Activated CD4-positive, alpha-beta memory T cell treated with anti-CD3 and anti-CD28 coated beads, Interleukin-2, amount 10 ng/mL, durations not matched to agents 7 days and 5 days (primary cell): ENCODE measurements at regions of chr22 and their contacts with region 1.

Region 1: DNA sequence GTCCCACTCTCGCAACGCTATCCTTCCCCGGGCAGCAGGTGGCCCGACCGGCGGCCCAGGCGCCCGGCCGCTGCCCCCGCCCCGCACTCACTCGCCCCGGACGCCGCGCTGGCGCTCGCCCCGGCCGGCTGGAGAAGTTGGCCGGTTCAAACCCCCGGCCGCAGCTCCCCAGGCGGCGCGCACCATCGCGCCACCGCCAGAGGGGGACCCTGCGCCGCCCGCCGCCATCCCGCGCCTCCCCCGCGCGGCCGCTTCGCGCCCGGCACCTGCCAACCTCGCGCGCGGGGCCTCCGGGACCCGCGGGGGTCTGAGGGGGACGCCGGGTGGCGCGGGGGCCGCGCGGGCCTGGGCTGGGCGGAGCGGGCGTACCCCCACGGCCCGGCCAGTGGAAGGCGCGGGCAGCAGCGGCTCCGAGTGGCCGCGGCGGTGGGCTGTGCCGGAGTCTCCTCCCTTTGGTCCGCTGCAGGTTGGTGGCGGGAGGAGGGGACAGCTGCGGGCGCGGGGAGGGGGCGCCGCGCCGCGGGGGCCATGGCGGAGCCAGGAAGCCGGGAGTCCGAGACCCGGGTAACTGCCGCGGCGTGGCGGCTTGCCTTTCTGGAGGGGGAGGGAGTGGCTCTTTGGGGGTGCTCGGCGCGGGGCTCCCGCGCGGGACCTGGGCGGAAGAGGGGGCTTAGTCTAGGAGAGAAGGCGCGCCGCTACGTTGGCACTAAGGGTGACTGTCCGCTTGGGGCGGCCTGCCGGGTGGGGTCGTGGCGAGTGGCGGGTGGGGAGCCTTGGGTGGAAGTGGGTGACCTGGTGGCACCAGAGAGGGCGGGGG is at the starts of genes MPST and TST:
- DNase-seq: peak; percentile 63
- H3K4me3 Mint-ChIP-seq: peak within 1 kb of the TSS; percentile 90
- H3K27ac Mint-ChIP-seq: peak within 1 kb of the TSS; percentile 74
- H3K4me1 Mint-ChIP-seq: peaks cover 20% of the 10 kb centered on the region
- H3K27me3 Mint-ChIP-seq: no peaks in the 10 kb centered on the region
- total RNA-seq, gene MPST: 29.6 to 32.7 TPM
- total RNA-seq, gene TST: 7.2 to 8.3 TPM

Region 2: GRCh38 chr22:37043828-37044538 is 24.5 kb after region 1 on chr22:
- CTCF ChIA-PET with region 1: interaction called, 13 read pairs
- POLR2A ChIA-PET with region 1: no interaction called
- DNase-seq: peak; percentile 66
- H3K4me3 Mint-ChIP-seq: no peak overlapping the region
- H3K27ac Mint-ChIP-seq: no peak overlapping the region
- H3K4me1 Mint-ChIP-seq: peaks cover 26% of the 10 kb centered on the region
- H3K27me3 Mint-ChIP-seq: peaks cover 6% of the 10 kb centered on the region

Region 3: DNA sequence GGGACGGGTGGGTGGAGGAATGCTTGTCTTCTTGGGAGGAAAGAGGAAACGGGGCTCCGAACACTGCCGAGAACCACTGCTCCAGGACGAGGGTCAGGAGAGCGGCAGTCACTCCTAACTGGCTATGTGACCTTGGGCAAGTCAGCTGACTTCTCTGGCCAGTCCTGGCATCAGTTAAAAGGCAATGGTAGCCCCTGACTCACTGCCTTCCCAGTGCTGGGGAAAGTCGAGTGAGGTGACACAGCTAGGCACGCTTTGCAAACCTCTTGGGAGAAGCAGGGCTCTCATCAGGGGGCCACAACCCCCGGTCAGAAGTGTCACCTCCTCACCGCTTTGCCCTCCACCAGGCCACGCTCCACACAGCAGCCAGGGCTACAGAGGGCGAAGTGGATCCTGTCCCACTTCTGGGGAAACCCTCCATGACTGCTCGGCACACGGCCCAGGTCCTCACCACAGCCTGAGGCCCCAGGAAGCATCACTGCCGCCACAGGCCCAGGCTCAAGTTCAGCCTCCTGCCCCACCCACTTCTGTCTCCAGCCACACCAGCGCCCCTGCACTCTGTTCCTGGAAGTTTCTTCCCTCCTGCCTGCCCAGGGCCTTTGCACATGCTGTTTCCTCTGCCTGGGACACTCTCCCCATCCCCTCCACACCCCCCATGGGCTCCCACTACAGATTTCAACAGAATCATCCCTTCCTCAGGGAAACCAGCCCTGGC is 113.9 kb after region 1 on chr22:
- CTCF ChIA-PET with region 1: no interaction called
- POLR2A ChIA-PET with region 1: no interaction called
- DNase-seq: no peak
- H3K4me3 Mint-ChIP-seq: no peak overlapping the region
- H3K27ac Mint-ChIP-seq: peak overlapping the region; percentile 49
- H3K4me1 Mint-ChIP-seq: peaks cover 47% of the 10 kb centered on the region
- H3K27me3 Mint-ChIP-seq: no peaks in the 10 kb centered on the region